H1 (cell line): ENCODE measurements at regions of chr7 and their contacts with region 1.

Region 1: DNA sequence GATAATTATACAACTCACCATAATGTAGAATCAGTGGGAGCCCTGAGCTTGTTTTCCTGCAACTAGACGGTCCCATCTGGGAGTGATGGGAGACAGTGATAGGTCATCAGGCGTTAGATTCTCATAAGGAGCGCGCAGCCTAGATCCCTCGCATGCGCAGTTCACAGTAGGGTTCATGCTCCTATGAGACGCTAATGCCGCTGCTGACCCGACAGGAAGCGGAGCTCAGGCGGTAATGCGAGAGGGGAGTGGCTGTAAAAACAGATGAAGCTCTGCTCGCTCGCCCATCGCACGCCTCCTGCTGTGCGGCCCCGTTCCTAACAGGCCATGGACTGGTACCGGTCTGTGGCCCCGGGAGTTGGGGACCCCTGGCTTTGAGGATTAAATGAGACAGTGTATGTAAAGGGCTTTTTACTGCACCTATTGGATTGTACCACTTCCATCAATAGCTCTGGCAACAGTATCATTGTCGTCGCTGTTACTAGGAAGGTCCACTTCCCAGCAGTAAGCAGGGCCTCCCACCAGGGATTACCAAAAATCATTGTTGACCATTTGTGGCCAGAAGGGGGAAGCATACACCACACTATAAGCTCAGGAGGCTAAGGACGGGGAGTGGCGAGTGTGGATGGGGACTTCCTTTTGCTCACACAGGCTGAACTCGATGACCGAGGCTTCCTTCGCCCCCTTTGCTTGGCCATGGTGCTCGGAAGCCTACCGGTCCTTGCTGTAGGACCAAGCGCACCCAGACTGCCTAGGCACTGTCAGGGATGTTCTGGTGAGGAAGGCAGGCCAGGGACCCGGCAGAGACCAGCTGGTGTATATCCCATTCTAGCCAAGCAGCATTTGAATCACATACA is 26.4 kb downstream of the AKR1B1 start:
- DNase-seq: peak; percentile 73 to 84
- H3K4me3 ChIP-seq: peak overlapping the region; percentile 38 to 68 (median 58); a peak in 7 of 8 replicates
- H3K27ac ChIP-seq: no peak overlapping the region
- H3K4me1 ChIP-seq: peaks cover 0 to 2% (median under 1%) of the 10 kb centered on the region in 4 experiments; a peak in 1 of 7 replicates
- H3K27me3 ChIP-seq: no peaks in the 10 kb centered on the region; a peak in 2 of 7 replicates
- CTCF ChIP-seq: peak; percentile 55 to 89 (median 86)
- EP300 ChIP-seq: no peak
- POLR2A ChIP-seq: no peak; a peak in 1 of 3 replicates
- RAD21 ChIP-seq: peak; percentile 94 to 95

Region 2: DNA sequence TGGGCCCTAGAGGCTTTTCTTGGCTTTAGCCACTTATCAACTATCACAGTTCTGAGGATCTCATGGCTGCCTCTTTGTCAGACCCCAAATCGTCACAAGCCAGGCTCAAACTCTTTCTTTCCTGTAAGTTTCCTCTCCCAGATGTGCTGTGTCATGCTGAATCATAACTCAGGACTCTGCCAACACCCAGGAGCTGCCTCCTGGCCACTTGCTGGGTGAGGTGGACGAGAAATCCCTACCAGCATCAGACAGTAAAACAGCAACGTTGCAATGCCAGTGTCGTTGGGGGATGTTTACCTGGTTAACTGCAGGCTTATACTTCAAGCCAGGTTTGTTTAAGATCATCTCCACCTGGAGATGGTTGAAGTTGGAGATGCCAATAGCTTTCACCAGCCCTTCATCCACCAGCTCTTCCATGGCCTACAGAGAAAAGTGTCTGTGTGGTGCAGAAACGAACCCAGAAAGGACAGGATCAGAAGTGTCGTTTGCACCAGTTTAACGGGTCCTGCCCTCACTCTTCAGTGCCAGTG is 16.2 kb after region 1 on chr7:
- CTCF ChIA-PET with region 1: interaction called, 43 read pairs
- POLR2A ChIA-PET with region 1: no interaction called
- DNase-seq: no peak
- H3K4me3 ChIP-seq: no peak overlapping the region
- H3K27ac ChIP-seq: no peak overlapping the region
- H3K4me1 ChIP-seq: no peaks in the 10 kb centered on the region; a peak in 1 of 7 replicates
- H3K27me3 ChIP-seq: no peaks in the 10 kb centered on the region
- CTCF ChIP-seq: no peak
- EP300 ChIP-seq: no peak
- POLR2A ChIP-seq: no peak
- RAD21 ChIP-seq: no peak

Region 3: GRCh38 chr7:134480736-134481135 is 48.2 kb after region 1 on chr7:
- CTCF ChIA-PET with region 1: interaction called, 24 read pairs
- POLR2A ChIA-PET with region 1: no interaction called
- DNase-seq: no peak
- H3K4me3 ChIP-seq: no peak overlapping the region
- H3K27ac ChIP-seq: no peak overlapping the region
- H3K4me1 ChIP-seq: no peaks in the 10 kb centered on the region
- H3K27me3 ChIP-seq: no peaks in the 10 kb centered on the region
- CTCF ChIP-seq: no peak
- EP300 ChIP-seq: no peak
- POLR2A ChIP-seq: no peak
- RAD21 ChIP-seq: no peak

Region 4: DNA sequence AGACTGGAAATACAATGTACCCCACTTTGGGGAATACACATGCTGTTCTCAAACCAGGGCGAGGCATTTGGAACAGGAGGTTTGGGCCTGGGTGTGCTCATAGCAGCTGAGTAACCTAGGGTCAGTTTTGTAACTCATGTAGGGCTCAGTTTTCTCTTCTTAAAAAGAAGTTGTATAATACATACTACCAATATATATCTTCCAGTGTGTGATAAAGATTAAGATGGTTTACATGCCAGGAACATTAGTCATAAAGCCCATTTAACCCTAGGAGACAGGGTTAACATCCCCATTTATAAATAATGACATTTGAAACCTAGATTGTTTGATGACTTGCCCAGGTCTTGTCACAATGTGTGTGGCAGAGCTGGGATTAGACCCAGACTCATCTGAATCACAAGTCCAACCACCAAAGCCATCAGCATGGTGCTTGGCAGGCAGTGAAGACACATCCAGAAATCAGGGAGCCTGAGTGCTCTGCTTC is 100.8 kb after region 1 on chr7:
- CTCF ChIA-PET with region 1: interaction called, 12 read pairs
- POLR2A ChIA-PET with region 1: no interaction called
- DNase-seq: no peak
- H3K4me3 ChIP-seq: no peak overlapping the region
- H3K27ac ChIP-seq: no peak overlapping the region
- H3K4me1 ChIP-seq: no peaks in the 10 kb centered on the region
- H3K27me3 ChIP-seq: no peaks in the 10 kb centered on the region; a peak in 1 of 7 replicates
- CTCF ChIP-seq: no peak
- EP300 ChIP-seq: no peak
- POLR2A ChIP-seq: no peak
- RAD21 ChIP-seq: no peak

Region 5: DNA sequence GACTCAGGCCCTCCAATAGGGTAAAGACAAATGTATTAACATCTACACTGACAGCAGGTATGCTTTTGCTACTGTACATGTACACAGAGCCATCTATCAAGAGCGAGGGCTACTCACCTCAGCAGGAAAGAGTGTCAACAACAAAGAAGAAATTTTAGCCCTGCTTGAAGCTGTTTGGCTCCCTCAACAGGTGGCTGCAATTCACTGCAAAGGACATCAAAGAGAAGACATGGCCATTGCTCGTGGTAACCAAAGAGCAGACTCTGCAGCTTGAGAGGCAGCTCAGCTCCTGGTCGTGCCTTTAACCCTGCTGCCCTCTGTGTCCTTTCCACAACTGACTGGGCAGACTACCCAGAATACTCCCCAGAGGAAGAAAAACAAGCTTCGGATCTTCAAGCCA is 121.5 kb after region 1 on chr7:
- CTCF ChIA-PET with region 1: interaction called, 40 read pairs
- POLR2A ChIA-PET with region 1: no interaction called
- DNase-seq: no peak
- H3K4me3 ChIP-seq: no peak overlapping the region
- H3K27ac ChIP-seq: no peak overlapping the region
- H3K4me1 ChIP-seq: no peaks in the 10 kb centered on the region; a peak in 1 of 7 replicates
- H3K27me3 ChIP-seq: no peaks in the 10 kb centered on the region
- CTCF ChIP-seq: peak; percentile 20 to 64 (median 35); a peak in 3 of 4 replicates
- EP300 ChIP-seq: no peak
- POLR2A ChIP-seq: no peak
- RAD21 ChIP-seq: peak; percentile 49 to 56